Naive thymus-derived CD8-positive, alpha-beta T cell (primary cell): ENCODE measurements at regions of chr14 and their contacts with region 1.

Region 1: DNA sequence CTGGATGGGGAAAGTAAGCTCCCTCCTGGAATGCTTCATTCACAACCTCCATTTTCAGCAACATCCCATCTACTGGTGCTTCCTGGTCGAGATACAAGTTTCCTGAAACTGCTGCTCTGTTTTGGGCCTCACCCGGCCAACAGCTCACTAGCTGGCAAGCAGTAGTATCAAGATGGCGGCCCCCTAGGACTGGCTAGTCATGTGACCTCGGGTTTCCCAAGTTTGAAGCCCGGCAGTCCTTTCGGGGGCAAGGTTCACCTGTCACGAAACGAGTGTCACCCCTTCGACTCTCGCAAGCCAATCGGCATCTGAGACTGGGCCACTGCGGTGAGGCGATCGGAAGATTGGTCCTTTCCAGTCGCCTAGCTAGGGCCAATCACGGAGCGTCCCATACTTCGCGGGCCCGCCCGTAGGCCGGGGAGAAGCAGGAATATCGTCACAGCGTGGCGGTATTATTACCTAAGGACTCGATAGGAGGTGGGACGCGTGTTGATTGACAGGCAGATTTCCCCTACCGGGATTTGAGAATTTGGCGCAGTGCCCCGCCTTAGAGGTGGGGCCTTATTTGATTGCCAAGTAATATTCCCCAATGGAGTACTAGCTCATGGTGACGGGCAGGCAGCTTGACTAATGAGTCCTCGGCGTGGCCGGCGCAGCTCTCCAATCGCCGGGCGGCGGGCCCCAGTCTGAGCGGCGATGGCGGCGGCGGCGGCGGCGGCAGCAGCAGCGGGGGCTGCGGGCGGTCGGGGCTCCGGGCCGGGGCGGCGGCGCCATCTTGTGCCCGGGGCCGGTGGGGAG is at the start of gene PABPN1:
- DNase-seq: peak; percentile 91 to 99 (median 98)
- ATAC-seq: peak; percentile 89
- H3K4me3 Mint-ChIP-seq: peak within 1 kb of the TSS; percentile 87 to 96 (median 92)
- H3K27ac Mint-ChIP-seq: peak within 1 kb of the TSS; percentile 97 to 99 (median 99)
- H3K4me1 Mint-ChIP-seq: peaks cover 18 to 32% (median 30%) of the 10 kb centered on the region in 4 donors
- H3K27me3 Mint-ChIP-seq: no peaks in the 10 kb centered on the region
- polyA plus RNA-seq, gene PABPN1: 84.3 to 96.9 (median 88.5) TPM

Region 2: DNA sequence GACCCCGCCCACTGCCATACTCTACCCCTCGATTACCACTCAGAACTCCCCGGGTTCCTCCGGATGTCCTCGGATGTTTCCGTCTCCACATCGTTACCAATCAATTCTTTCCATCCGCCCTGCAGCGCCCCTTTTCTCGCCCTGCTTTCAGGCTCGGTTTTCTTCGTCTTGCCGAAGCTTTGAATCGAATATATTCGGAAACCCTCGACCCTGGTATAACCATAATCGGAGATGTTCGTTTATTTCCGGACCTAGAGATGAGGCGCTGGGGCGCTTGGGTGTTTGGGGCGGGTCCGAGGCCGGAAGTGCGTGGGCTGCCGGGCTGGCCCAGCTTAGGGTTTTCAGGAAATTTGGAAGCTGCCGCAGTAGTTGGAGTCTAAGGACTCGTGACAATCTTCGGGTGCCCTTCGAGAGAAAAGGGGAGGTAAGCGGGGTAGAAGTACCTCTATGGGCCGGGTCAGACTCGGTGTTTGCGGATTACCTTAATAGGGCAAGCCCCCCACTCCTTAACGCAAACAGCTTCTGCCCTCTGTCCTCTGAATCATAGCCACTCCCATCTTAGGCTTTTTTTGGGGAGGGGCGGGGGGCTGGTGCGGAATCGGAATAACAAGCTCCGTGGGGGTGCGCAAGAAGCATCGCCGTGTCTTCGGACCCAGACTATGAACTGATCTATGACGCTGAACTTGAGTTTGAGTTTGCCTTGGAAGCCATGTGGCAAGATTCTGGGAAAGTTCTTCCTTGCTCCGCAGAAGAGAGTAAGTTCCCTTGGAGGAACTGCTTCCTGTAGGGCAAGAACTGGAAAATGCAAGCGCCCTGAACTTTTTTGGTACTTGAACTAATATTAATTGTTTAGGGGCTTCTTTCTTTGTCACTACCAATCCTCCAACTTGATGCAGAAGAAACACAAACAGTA is 225.5 kb before region 1 on chr14 and contains the start of gene C14orf119:
- POLR2A ChIA-PET with region 1: interaction called, 22 read pairs
- DNase-seq: peak in 9 of 10 donors; percentile 81 to 100 (median 100)
- ATAC-seq: peak; percentile 88
- H3K4me3 Mint-ChIP-seq: no peak within 1 kb of the TSS
- H3K27ac Mint-ChIP-seq: no peak within 1 kb of the TSS
- H3K4me1 Mint-ChIP-seq: peaks cover 24 to 60% (median 34%) of the 10 kb centered on the region in 4 donors
- H3K27me3 Mint-ChIP-seq: no peaks in the 10 kb centered on the region
- polyA plus RNA-seq, gene C14orf119: 62.7 to 122 (median 78.5) TPM

Region 3: GRCh38 chr14:23294734-23295561 is 26.0 kb before region 1 on chr14:
- POLR2A ChIA-PET with region 1: interaction called, 376 read pairs
- DNase-seq: peak; percentile 40 to 79 (median 60)
- ATAC-seq: peak; percentile 81 to 91
- H3K4me3 Mint-ChIP-seq: peak overlapping the region; percentile 15 to 82 (median 65)
- H3K27ac Mint-ChIP-seq: peak overlapping the region; percentile 44 to 91 (median 77)
- H3K4me1 Mint-ChIP-seq: peaks cover 8 to 31% (median 24%) of the 10 kb centered on the region in 4 donors
- H3K27me3 Mint-ChIP-seq: peaks cover 0 to 2% (median 0%) of the 10 kb centered on the region in 5 donors

Region 4: GRCh38 chr14:23352511-23353432 is 31.8 kb after region 1 on chr14 and contains the start of gene SLC22A17:
- POLR2A ChIA-PET with region 1: interaction called, 25 read pairs
- DNase-seq: peak; percentile 38 to 83 (median 70)
- ATAC-seq: peak; percentile 93 to 95
- H3K4me3 Mint-ChIP-seq: peak within 1 kb of the TSS; percentile 75 to 91 (median 86)
- H3K27ac Mint-ChIP-seq: peak within 1 kb of the TSS in 8 of 10 donors; percentile 41 to 90 (median 78)
- H3K4me1 Mint-ChIP-seq: peaks cover 15 to 21% (median 18%) of the 10 kb centered on the region in 4 donors
- H3K27me3 Mint-ChIP-seq: peaks cover 3 to 51% (median 12%) of the 10 kb centered on the region in 5 donors
- polyA plus RNA-seq, gene SLC22A17: 3.9 to 9.6 (median 5.5) TPM

Region 5: DNA sequence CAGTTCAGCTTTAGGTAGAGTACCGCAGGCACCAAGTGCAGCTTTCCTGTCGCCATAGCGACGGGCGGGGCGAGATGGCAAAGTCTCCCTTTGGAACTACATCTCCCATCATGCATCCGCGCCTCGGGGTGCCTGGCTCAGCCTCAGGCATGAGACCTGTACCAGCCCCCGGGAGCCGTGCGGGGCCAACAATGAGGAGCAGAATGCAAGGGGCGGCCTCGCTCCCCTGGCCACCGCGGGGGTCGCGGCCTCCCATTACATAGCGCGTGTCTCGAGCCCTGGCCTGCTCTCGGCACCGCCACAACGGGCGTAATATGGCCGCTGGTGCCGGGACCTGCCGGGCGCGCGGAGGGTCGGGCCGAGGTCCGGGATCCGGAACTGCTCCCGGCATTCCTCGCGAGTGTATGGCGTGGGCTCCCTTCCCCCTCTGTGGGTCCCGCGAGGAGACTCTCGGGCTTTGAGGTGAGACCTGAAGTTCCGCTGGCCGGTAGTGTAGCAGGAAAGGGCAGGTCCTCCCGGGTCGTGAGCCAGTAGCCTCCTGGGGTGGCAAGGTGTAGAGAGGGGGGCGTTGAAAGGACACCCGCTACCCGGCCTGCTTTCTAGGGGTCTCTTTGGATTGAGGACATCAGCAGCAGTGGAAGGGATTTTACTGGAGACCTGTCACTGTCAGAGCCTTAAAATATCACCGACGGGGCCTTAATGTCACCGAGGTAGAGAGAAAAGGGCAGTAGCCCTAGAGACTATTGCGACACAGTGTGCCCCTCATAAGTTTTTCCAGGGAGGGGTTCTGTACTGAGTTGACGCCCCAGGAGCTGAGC is 235.1 kb after region 1 on chr14 and contains the start of gene THTPA:
- POLR2A ChIA-PET with region 1: interaction called, 10 read pairs
- DNase-seq: peak; percentile 85 to 97 (median 92)
- ATAC-seq: peak; percentile 88 to 91
- H3K4me3 Mint-ChIP-seq: peak within 1 kb of the TSS; percentile 88 to 99 (median 96)
- H3K27ac Mint-ChIP-seq: peak within 1 kb of the TSS; percentile 89 to 98 (median 95)
- H3K4me1 Mint-ChIP-seq: peaks cover 14 to 64% (median 34%) of the 10 kb centered on the region in 4 donors
- H3K27me3 Mint-ChIP-seq: no peaks in the 10 kb centered on the region
- polyA plus RNA-seq, gene THTPA: 14.9 to 15.6 (median 14.9) TPM

Region 6: GRCh38 chr14:24411443-24412389 is 1090.7 kb after region 1 on chr14:
- POLR2A ChIA-PET with region 1: no interaction called
- DNase-seq: peak in 3 of 10 donors; percentile 26 to 53 (median 28)
- ATAC-seq: peak; percentile 53 to 70
- H3K4me3 Mint-ChIP-seq: no peak overlapping the region
- H3K27ac Mint-ChIP-seq: no peak overlapping the region
- H3K4me1 Mint-ChIP-seq: no peaks in the 10 kb centered on the region
- H3K27me3 Mint-ChIP-seq: peaks cover 0 to 9% (median 3%) of the 10 kb centered on the region in 5 donors